GM10248 (cell line): ENCODE measurements at regions of chr16 and their contacts with region 1.

Region 1: DNA sequence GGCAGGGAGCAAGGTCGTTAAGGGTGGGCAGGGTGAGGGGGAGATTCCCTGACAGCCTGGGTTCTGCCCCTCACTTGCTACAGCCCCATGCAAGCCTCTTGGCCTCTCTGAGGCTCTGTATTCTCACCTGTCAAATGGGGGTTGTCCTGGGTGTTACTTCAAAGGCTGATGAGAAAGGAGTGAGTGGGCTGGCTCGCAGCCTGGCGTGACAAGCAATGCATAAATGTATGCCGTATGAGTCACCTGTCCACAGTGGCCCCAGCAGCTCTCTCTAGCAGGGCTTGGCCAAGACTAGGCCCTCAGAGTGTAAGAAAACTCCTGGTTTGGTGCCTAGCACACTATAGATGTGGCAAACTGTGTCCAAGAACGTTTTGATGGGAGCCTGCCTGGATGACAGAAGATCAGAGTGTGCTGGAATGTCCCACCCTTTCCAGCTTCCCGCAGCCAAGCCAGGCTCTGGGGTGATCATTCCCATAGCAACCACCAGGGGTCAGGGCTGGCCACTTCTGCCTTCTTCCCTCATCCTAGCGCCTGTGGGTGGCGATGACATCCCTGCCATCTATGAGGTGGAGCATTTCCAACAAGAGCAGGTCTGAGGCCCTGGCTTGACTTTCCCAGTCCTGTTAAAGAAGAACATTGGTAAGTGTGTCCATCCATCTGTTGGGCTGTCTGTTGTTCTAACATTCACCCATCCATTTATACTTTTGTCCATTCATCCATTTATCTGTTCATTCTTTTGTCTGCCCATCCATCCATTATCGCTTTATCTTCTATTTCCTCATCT is 37.2 kb upstream of the ADGRG1 start:
- DNase-seq: peak; percentile 79
- CTCF ChIP-seq: peak; percentile 84

Region 2: GRCh38 chr16:57156351-57156703 is 435.0 kb before region 1 on chr16:
- CTCF ChIA-PET with region 1: no interaction called
- POLR2A ChIA-PET with region 1: no interaction called
- DNase-seq: no peak
- CTCF ChIP-seq: no peak

Region 3: DNA sequence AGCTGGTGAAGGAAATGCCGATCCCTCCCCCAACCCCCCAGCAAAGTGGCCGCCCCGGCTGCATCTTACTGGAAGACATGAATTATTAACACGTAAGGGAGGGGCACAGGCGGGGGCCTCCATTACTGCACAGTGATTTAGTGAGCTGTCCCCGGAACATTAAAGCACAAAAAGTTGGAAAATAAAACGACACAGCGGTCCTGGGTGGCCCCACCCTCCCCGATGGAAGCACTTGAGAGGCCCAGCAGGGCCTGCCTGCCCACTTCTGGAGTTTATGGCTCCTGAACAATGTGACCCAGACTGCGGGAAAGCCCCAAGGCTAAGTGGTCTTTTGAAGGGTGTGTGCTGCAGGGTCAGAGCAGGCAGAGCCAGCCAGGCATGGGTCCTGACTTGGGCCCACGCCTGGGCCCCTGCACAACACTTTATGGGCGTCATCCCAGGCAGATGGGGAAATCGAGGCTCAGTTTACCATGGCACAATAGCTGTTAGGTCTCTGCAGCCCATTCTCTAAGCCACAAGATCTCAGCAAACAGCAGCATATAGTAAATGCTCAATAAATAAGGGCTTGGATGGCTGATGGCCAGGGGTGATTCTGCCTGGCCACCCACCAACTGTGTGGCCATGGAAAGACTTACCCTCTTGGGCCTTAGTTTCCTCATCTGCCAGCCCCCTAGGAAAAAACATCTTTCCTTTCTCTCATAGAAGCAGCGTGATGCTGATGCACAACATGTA is 77.7 kb before region 1 on chr16:
- CTCF ChIA-PET with region 1: no interaction called
- POLR2A ChIA-PET with region 1: no interaction called
- DNase-seq: no peak
- CTCF ChIP-seq: no peak

Region 4: GRCh38 chr16:57609541-57610401 is 18.5 kb after region 1 on chr16:
- CTCF ChIA-PET with region 1: interaction called, 78 read pairs
- POLR2A ChIA-PET with region 1: interaction called, 3 read pairs
- DNase-seq: peak; percentile 85
- CTCF ChIP-seq: peak; percentile 47

Region 5: GRCh38 chr16:57639172-57639887 is 48.1 kb after region 1 on chr16:
- CTCF ChIA-PET with region 1: interaction called, 19 read pairs
- POLR2A ChIA-PET with region 1: no interaction called
- DNase-seq: no peak
- CTCF ChIP-seq: no peak

Region 6: DNA sequence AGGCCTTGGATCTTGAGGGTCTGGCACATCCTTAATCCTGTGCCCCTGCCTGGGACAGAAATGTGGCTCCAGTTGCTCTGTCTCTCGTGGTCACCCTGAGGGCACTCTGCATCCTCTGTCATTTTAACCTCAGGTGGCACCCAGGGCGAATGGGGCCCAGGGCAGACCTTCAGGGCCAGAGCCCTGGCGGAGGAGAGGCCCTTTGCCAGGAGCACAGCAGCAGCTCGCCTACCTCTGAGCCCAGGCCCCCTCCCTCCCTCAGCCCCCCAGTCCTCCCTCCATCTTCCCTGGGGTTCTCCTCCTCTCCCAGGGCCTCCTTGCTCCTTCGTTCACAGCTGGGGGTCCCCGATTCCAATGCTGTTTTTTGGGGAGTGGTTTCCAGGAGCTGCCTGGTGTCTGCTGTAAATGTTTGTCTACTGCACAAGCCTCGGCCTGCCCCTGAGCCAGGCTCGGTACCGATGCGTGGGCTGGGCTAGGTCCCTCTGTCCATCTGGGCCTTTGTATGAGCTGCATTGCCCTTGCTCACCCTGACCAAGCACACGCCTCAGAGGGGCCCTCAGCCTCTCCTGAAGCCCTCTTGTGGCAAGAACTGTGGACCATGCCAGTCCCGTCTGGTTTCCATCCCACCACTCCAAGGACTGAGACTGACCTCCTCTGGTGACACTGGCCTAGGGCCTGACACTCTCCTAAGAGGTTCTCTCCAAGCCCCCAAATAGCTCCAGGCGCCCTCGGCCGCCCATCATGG is 72.8 kb after region 1 on chr16:
- CTCF ChIA-PET with region 1: interaction called, 11 read pairs
- POLR2A ChIA-PET with region 1: no interaction called
- DNase-seq: no peak
- CTCF ChIP-seq: no peak

Region 7: GRCh38 chr16:57694725-57695679 is 103.7 kb after region 1 on chr16 and contains the start of gene DRC7:
- CTCF ChIA-PET with region 1: no interaction called
- POLR2A ChIA-PET with region 1: no interaction called
- DNase-seq: peak; percentile 73
- CTCF ChIP-seq: no peak

Region 8: GRCh38 chr16:57899771-57900661 is 308.7 kb after region 1 on chr16:
- CTCF ChIA-PET with region 1: no interaction called
- POLR2A ChIA-PET with region 1: no interaction called
- DNase-seq: peak; percentile 71
- CTCF ChIP-seq: peak; percentile 77